ENCODE measurements at regions of chr6 and their contacts with region 1.

Region 1: GRCh38 chr6:125834348-125834747 is 43.6 kb downstream of the NCOA7 start:
- DNase-seq: no peak
- H3K4me3 ChIP-seq: no peak overlapping the region
- H3K27ac ChIP-seq: peak overlapping the region; percentile 28 to 55 (median 39)
- H3K4me1 ChIP-seq: peaks cover 0 to 26% (median 7%) of the 10 kb centered on the region in 4 donors
- H3K27me3 ChIP-seq: no peaks in the 10 kb centered on the region
- CTCF ChIP-seq: no peak
- EP300 ChIP-seq: no peak
- POLR2A ChIP-seq: no peak

Region 2: DNA sequence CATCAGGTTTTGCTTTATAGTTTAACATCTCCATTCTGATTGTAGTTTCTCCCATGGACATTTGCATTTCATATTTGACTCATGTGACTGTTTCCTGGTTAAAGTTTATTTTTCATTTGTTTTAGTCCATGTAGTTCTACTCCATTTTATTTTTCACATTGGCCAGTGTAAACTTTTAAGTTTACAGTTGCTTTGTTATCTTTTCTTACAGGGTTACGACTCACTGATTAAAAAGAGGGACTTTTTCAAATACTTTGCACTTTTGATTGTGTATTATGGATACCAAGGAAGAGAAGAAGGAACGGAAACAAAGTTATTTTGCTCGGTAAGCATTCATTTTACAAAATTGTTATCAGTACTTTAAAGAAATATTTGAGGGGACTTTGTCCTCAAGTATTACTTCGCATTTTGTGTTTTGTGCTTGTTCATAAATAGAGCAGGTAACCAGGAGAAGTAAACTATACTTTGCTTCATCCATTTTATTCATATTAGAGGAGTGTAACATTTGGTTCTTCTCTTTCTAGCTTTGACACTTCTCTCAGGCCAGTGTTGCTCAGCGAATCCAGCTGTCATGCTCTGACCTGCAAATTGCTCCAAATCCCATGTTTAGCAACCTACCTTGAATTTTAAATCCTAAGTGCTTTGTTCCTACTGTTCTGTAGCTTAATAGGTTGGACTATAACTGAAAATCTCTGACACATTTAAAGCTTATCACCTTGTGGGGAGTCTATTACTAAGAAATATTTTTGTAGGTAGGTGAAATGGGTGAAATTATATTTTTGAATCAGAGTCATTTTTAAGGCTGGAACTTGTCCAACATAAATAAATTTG is 19.1 kb before region 1 on chr6:
- in situ Hi-C with region 1: no loop called
- intact Hi-C with region 1: loop called (anchors 1 kb)
- DNase-seq: no peak
- H3K4me3 ChIP-seq: no peak overlapping the region
- H3K27ac ChIP-seq: peak overlapping the region; percentile 4 to 37 (median 16)
- H3K4me1 ChIP-seq: peaks cover 0 to 56% (median 18%) of the 10 kb centered on the region in 4 donors
- H3K27me3 ChIP-seq: no peaks in the 10 kb centered on the region
- CTCF ChIP-seq: no peak
- EP300 ChIP-seq: no peak
- POLR2A ChIP-seq: no peak

Region 3: GRCh38 chr6:126086560-126086959 is 252.2 kb after region 1 on chr6:
- in situ Hi-C with region 1: no loop called
- intact Hi-C with region 1: no loop called
- DNase-seq: no peak
- H3K4me3 ChIP-seq: no peak overlapping the region
- H3K27ac ChIP-seq: no peak overlapping the region
- H3K4me1 ChIP-seq: no peaks in the 10 kb centered on the region
- H3K27me3 ChIP-seq: no peaks in the 10 kb centered on the region
- CTCF ChIP-seq: no peak
- EP300 ChIP-seq: no peak
- POLR2A ChIP-seq: no peak